AG04449 (cell line): ENCODE measurements at regions of chr3 and their contacts with region 1.

Region 1: DNA sequence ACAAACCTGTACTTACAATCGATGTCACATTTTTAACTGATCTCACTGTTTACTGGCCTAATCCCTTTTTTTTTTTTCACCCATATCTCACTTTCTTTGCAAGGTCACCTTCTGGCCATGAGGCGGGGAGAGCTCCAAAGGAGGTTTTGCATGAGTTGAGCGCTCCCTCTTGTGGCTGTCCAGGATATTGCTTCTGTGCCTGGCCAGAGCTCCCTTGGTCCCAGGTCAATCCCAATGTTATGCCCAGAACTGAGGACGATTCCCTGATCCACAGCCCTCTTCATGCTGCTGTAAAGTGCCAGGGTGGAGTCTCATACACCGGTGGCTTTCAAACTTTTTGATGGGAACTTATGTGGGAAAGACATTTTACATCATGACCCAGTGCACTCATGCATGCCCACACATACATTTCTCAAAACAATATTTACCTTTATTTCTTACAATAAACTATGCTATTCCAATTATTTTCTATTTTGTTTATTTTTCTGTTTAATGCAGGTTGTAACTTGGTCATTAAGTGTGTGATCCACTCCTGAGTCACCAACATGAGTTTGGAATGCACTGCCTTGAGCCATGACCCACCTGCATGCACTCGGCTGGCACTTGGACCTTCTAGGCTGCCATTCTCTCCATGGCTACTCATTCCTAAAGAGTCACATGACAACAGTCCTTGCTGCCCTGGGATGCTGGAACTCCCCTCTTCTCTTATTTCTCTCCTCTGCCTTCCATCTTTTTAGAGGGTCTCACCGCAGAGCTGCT is 9.6 kb upstream of the SST start:
- DNase-seq: no peak
- H3K4me3 ChIP-seq: no peak overlapping the region
- CTCF ChIP-seq: peak; percentile 93

Region 2: DNA sequence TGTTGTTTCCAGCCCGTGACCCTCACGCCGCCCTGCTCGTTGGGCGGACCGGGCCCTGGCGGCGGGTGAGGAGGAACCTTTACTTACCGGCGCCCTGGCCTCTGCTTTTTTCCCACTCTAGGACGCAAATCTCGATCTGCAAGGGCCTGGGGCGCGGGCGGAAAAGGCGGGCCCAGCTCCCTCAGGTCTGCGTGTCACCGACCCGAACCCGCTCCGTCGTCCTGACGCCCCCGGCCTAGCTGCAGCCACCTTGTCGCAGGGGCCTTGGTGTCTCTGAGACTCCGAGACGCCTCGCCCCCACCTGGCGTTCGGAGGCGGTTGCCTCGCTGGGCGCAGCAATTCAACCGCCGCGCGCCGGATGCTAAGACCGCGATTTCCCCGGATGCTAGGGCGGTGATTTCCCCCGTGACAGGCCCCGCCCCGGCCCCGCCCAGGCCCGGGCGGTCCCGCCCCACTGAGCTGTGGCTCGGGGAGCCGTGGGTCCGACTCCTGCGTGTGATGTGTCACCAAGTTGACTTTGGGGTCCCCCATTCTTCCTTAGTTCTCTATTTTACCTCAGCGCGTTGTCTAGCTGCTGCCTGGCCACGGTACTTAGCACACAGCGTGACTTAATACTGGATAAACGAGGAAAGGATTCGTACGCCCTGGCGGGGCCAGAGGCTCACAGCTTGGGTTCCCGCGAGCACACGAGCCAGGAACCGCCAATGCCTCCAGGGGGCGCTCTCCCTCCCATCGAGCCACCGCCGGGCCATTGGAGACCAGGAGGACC is 540.5 kb before region 1 on chr3 and contains the start of gene RPL39L:
- CTCF ChIA-PET with region 1: interaction called, 22 read pairs
- POLR2A ChIA-PET with region 1: no interaction called
- DNase-seq: peak; percentile 21
- H3K4me3 ChIP-seq: peak within 1 kb of the TSS; percentile 81
- CTCF ChIP-seq: peak; percentile 97

Region 3: GRCh38 chr3:187227658-187228258 is 452.1 kb before region 1 on chr3:
- CTCF ChIA-PET with region 1: interaction called, 538 read pairs
- POLR2A ChIA-PET with region 1: no interaction called
- DNase-seq: peak; percentile 46
- H3K4me3 ChIP-seq: no peak overlapping the region
- CTCF ChIP-seq: no peak

Region 4: GRCh38 chr3:187305881-187306280 is 373.9 kb before region 1 on chr3:
- CTCF ChIA-PET with region 1: interaction called, 24 read pairs
- POLR2A ChIA-PET with region 1: no interaction called
- DNase-seq: no peak
- H3K4me3 ChIP-seq: no peak overlapping the region
- CTCF ChIP-seq: no peak

Region 5: GRCh38 chr3:187610981-187611511 is 68.8 kb before region 1 on chr3:
- CTCF ChIA-PET with region 1: interaction called, 47 read pairs
- POLR2A ChIA-PET with region 1: no interaction called
- DNase-seq: no peak
- H3K4me3 ChIP-seq: no peak overlapping the region
- CTCF ChIP-seq: no peak

Region 6: GRCh38 chr3:187694801-187695200 is 15.0 kb after region 1 on chr3:
- CTCF ChIA-PET with region 1: interaction called, 78 read pairs
- POLR2A ChIA-PET with region 1: no interaction called
- DNase-seq: no peak
- H3K4me3 ChIP-seq: no peak overlapping the region
- CTCF ChIP-seq: no peak